ENCODE measurements at regions of chr6 and their contacts with region 1.

Region 1: GRCh38 chr6:166394036-166394892 is 11.5 kb upstream of the MPC1 start:
- DNase-seq: no peak
- H3K4me3 ChIP-seq: no peak overlapping the region
- H3K27ac ChIP-seq: no peak overlapping the region
- H3K4me1 ChIP-seq: no peaks in the 10 kb centered on the region
- H3K27me3 ChIP-seq: peaks cover 11% of the 10 kb centered on the region; the same call in 1 of the 2 replicates

Region 2: GRCh38 chr6:166275714-166276166 is 118.5 kb before region 1 on chr6:
- in situ Hi-C with region 1: loop called (anchors 10 kb)
- DNase-seq: peak; percentile 74
- H3K4me3 ChIP-seq: no peak overlapping the region
- H3K27ac ChIP-seq: no peak overlapping the region
- H3K4me1 ChIP-seq: no peaks in the 10 kb centered on the region
- H3K27me3 ChIP-seq: peaks cover 16% of the 10 kb centered on the region; the same call in 1 of the 2 replicates

Region 3: GRCh38 chr6:167428664-167429333 is 1034.5 kb after region 1 on chr6:
- in situ Hi-C with region 1: no loop called
- DNase-seq: no peak
- H3K4me3 ChIP-seq: no peak overlapping the region
- H3K27ac ChIP-seq: no peak overlapping the region
- H3K4me1 ChIP-seq: no peaks in the 10 kb centered on the region
- H3K27me3 ChIP-seq: no peaks in the 10 kb centered on the region